Heart right ventricle (tissue), 16 donors: ENCODE measurements at regions of chr3 and their contacts with region 1.

Region 1: DNA sequence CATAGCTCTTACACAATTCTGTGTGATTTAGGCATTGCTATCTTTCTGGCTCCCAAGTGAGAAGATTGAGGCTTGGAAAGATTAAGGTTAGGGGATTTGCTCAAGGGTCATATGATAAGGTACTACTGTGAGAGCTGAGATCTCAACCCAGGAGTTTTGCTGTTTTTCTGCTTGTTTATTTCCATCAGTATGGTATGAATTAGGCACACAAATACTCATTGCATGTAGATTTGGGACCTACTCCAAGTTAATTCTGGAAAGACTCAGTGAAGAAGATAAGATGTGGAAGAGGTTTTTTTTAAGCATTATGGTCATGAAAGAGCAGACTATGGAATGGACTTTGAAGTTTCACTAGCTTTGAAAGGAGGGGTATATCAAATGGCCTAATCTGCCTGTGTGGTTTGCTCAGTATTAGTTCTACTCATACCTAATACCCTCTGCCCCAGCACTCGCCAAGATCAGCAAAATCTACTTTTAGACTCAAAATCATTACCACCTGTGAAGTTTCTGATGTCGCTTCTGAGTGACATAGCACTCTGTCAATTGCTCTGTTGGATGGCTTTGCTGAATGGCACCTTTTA is 12.5 kb downstream of the MBNL1 start:
- DNase-seq: no peak
- ATAC-seq: peak in 6 of 8 donors; percentile 15 to 54 (median 30)
- H3K4me3 ChIP-seq: peak overlapping the region in 5 of 10 donors; percentile 1 to 21 (median 11)
- H3K27ac ChIP-seq: peak overlapping the region in 8 of 10 donors; percentile 57 to 77 (median 64)
- H3K4me1 ChIP-seq: peaks cover 0 to 98% (median 90%) of the 10 kb centered on the region in 9 donors
- H3K27me3 ChIP-seq: no peaks in the 10 kb centered on the region
- CTCF ChIP-seq: no peak

Region 2: GRCh38 chr3:152047465-152047864 is 233.8 kb before region 1 on chr3:
- intact Hi-C with region 1: no loop called
- DNase-seq: no peak
- ATAC-seq: peak in 6 of 8 donors; percentile 27 to 85 (median 66)
- H3K4me3 ChIP-seq: no peak overlapping the region
- H3K27ac ChIP-seq: peak overlapping the region in 5 of 10 donors; percentile 9 to 65 (median 38)
- H3K4me1 ChIP-seq: peaks cover 0 to 16% (median 3%) of the 10 kb centered on the region in 9 donors
- H3K27me3 ChIP-seq: no peaks in the 10 kb centered on the region
- CTCF ChIP-seq: no peak

Region 3: GRCh38 chr3:152331018-152331541 is 49.9 kb after region 1 on chr3:
- intact Hi-C with region 1: loop called in 1 of 10 experiments (anchors 5 kb)
- DNase-seq: peak in 1 of 2 donors; percentile 62
- ATAC-seq: peak; percentile 62 to 87 (median 81)
- H3K4me3 ChIP-seq: no peak overlapping the region
- H3K27ac ChIP-seq: peak overlapping the region in 9 of 10 donors; percentile 52 to 77 (median 66)
- H3K4me1 ChIP-seq: peaks cover 15 to 95% (median 81%) of the 10 kb centered on the region in 9 donors
- H3K27me3 ChIP-seq: no peaks in the 10 kb centered on the region
- CTCF ChIP-seq: no peak

Region 4: DNA sequence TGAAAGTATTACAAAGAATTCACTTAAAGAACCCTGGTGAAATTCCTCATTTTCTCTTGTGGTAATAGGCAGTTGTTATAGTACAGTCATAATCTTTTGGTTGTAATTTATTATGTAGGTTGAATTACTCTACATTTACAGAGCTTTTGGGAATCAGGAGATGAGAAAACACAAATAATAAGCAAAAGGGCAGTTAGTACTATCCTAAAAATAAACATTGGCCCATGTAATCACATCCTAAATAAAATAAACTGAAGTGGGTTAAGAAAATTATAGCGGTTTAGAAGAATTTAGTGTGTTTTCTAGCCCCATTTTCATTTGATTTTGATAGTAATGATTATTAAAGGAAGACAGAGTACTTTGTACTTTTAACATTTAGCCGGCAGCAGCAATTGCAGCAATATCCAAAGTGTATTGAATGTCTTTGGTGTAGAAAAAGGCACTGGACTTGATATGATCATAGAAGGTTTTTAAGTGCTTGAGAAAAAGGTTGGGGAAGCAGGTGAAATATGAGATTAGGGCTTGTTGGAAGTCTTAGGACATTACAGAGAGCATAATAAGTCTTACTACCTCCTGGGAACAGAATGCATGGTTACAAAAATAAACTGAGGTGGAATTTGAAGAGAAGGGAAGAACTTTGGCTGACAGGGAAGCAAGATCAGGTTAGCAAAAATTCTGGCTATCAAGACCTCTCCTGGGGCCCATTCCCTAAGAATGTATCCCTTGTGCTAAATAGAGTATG is 67.4 kb after region 1 on chr3:
- intact Hi-C with region 1: no loop called
- DNase-seq: no peak
- ATAC-seq: peak in 1 of 8 donors; percentile 9
- H3K4me3 ChIP-seq: no peak overlapping the region
- H3K27ac ChIP-seq: peak overlapping the region in 5 of 10 donors; percentile 0 to 41 (median 23)
- H3K4me1 ChIP-seq: peaks cover 0 to 93% (median 72%) of the 10 kb centered on the region in 9 donors
- H3K27me3 ChIP-seq: no peaks in the 10 kb centered on the region
- CTCF ChIP-seq: no peak

Region 5: GRCh38 chr3:152430223-152431002 is 149.2 kb after region 1 on chr3:
- intact Hi-C with region 1: loop called in 1 of 10 experiments (anchors 2 kb)
- DNase-seq: peak in 1 of 2 donors; percentile 58
- ATAC-seq: peak; percentile 65 to 98 (median 90)
- H3K4me3 ChIP-seq: no peak overlapping the region
- H3K27ac ChIP-seq: peak overlapping the region in 9 of 10 donors; percentile 12 to 81 (median 54)
- H3K4me1 ChIP-seq: peaks cover 0 to 54% (median 45%) of the 10 kb centered on the region in 9 donors
- H3K27me3 ChIP-seq: no peaks in the 10 kb centered on the region
- CTCF ChIP-seq: no peak